Aorta (tissue), 5 donors: ENCODE measurements at regions of chr7 and their contacts with region 1.

Region 1: DNA sequence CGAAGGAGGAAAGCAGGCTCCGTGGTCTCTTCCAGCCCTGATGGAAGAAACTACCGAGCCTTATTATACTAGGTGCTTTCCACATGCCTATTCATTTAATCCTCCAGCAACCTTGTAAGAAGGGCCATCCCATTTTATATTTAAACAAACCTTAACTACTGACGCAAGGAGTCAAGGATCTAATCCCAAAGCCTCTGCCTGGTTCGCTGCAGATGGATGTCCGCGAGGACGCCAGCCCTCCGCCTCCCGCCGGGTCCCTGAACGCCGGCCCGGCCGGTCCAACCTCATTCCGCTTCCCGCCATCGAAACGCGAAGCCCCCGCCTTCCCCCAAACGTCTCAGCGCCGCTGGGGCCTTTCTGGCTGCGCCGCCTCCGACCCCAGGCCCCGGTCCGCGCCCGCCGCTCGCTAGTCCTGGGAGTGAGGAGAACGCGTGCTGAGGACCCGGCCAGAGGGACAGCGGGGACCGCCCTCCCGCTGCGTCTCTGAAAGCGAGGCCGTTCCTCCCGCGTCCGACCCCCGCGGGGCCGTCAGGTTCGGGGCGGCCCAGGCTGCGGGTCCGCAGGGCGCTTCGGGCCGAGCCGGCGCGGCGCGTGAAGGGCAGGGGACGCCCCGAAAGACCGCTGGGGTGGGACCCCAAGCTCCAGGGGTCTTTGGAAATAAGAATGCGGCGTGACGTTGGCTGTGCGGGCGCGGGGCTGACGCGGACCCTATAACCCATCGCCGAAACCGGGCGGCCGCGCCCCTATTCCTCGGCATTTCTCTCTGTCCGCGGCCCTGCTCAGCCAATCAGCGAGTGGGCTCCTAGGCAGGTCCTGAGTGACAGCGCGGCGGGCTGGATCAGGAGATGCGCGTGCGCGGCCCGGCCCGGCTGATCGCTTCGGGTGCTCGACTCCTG is at the start of gene ATP6V0E2:
- DNase-seq: peak; percentile 97 to 98
- ATAC-seq: peak; percentile 95
- H3K4me3 ChIP-seq: peak within 1 kb of the TSS; percentile 55 to 67
- H3K27ac ChIP-seq: peak within 1 kb of the TSS in 1 of 2 donors; percentile 37
- H3K4me1 ChIP-seq: no peaks in the 10 kb centered on the region
- H3K27me3 ChIP-seq: no peaks in the 10 kb centered on the region
- total RNA-seq, gene ATP6V0E2: 12.2 to 19.9 TPM

Region 2: GRCh38 chr7:149624419-149625339 is 248.6 kb before region 1 on chr7:
- intact Hi-C with region 1: loop called in 1 of 2 experiments (anchors 10 kb)
- DNase-seq: peak; percentile 97 to 98
- ATAC-seq: peak; percentile 97
- H3K4me3 ChIP-seq: peak overlapping the region; percentile 72 to 94
- H3K27ac ChIP-seq: peak overlapping the region; percentile 28 to 49
- H3K4me1 ChIP-seq: no peaks in the 10 kb centered on the region
- H3K27me3 ChIP-seq: no peaks in the 10 kb centered on the region

Region 3: DNA sequence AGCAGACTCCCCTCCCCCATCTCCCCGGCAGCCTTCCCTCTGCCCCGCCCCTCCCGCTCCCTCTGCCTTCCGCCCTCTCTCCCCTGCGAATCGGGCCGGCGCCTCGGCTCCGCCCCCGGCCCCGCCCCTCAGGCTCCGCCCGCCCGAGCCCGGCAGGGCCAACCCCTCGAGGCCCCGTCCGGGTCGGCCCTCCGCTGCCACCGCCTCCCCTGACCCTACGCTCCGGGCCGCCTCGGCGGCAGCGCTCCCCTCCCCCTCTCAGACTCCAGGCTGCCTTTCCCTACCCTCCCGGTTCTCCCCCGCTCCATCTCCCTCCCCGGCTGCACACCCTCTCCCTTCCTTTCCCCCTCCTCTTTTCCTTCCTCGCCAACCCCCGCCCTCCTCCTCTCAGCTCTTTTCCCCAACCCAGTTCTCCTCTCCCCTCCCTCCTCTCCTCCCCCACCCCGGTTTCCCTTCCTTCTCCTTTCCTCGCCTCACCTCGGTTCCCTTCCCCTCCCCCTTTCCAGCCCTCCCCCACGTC is 101.5 kb before region 1 on chr7:
- intact Hi-C with region 1: loop called in 1 of 2 experiments (anchors 2 kb)
- DNase-seq: peak; percentile 95 to 96
- ATAC-seq: peak; percentile 95
- H3K4me3 ChIP-seq: peak overlapping the region; percentile 56 to 71
- H3K27ac ChIP-seq: no peak overlapping the region
- H3K4me1 ChIP-seq: no peaks in the 10 kb centered on the region
- H3K27me3 ChIP-seq: no peaks in the 10 kb centered on the region

Region 4: GRCh38 chr7:150404805-150405583 is 531.7 kb after region 1 on chr7:
- intact Hi-C with region 1: loop called in 1 of 2 experiments (anchors 10 kb)
- DNase-seq: peak; percentile 94 to 96
- ATAC-seq: peak; percentile 96
- H3K4me3 ChIP-seq: peak overlapping the region; percentile 60 to 63
- H3K27ac ChIP-seq: peak overlapping the region; percentile 46 to 58
- H3K4me1 ChIP-seq: no peaks in the 10 kb centered on the region
- H3K27me3 ChIP-seq: no peaks in the 10 kb centered on the region